ENCODE measurements at regions of chr10 and their contacts with region 1.

Region 1: DNA sequence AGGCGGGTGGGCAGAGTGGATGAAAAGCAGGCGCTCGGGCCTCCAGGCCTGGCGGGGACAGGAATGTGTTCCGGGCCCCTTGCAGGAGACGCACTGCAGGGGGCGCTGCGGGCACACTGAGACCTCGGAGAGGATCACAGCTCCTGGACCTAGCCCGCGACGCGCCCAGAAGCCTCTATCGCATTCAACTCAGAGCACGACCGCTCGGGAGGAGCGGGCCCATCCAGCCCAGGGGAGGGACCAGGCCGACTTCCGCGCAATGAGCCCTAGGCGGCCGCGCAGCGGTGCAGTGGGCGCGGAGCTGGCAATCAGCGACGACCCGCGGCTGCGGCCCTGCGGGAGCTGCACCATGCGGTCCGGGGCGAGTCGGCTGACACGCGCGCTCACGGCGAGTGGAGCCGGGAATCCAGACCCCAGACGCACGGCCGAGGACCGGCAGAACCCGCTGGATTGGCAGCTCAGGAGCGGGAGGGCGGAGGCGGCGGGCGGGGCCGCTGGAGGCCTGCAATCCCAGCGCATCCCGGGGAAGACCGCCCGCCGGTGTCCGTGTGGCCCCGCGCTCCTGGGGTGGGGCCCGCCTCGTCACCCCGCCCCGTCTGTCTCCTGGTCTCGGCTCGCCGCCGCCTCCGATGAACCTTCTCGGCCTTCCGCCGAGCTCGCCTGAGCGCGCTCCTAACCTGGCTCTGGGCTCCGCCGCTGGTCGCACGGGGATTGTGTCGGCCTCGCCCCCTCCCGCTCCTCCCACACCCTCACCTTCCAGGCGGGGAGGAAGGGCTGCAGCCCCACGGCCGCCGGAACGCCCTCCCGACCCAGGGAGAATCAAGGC is 33.5 kb upstream of the GRID1 start:
- DNase-seq: peak; percentile 93
- CTCF ChIP-seq: peak; percentile 95

Region 2: GRCh38 chr10:86545101-86545500 is 145.0 kb after region 1 on chr10:
- in situ Hi-C with region 1: no loop called
- DNase-seq: no peak
- CTCF ChIP-seq: no peak

Region 3: DNA sequence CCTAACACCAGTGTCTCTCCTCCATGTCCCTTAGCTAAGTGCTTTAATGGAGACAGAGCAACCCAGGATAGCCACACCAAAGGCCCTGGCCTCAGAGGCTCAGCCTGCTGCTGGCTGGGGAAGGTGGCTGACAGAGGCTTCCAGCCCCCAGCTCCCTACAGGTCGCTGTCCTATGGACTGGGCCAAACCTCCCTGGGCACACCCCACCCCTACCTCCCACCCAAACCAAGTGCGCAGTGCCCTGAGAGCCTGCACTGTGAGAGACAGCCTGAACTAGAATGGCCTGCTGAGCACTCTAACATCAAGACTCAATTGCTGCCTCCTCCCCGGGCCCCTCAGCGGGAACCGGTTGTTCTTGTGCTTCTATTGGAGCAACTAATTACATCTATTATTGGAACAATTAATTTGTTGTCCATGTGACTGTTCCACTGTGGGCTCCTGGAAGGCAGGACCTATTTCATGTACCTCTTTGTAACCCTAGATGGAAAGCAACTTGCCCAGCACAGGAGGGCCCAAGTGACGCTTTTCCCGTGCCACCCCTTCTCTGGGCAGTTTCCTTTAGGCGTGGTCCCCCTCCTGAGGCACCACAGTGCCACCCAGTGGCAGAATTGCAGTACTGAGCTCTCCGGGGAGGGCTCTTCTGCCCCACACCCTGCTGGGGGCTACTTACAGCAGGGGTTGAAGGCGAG is 185.1 kb after region 1 on chr10:
- in situ Hi-C with region 1: loop called (anchors 5 kb)
- DNase-seq: peak; percentile 83
- CTCF ChIP-seq: peak; percentile 95